OCI-LY7 (cell line): ENCODE measurements at regions of chr6 and their contacts with region 1.

Region 1: DNA sequence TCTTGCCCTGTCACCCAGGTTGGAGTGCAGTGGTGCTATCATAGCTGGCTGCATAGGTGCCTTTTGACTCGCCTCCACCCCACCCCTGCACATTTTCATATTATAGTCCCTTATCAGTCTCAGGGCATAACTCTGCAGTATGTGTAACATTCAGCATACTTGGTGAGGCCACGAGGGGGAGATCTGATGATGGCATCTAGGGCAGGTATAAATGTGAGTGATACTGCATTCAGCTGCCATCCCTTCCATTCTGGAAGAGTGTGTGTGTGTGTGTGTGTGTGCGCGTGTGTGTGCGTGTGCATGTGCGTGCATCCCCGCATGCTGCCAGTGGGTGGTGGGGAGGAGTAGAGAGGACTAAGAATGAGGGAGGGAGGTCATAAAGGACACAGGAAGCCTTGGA is 81.4 kb downstream of the JARID2 start:
- DNase-seq: peak; percentile 78
- H3K4me3 ChIP-seq: no peak overlapping the region
- H3K27ac ChIP-seq: no peak overlapping the region
- H3K4me1 ChIP-seq: peaks cover 78% of the 10 kb centered on the region
- CTCF ChIP-seq: peak; percentile 73

Region 2: GRCh38 chr6:15254070-15254841 is 73.0 kb before region 1 on chr6:
- CTCF ChIA-PET with region 1: no interaction called
- POLR2A ChIA-PET with region 1: interaction called, 5 read pairs
- intact Hi-C with region 1: loop called (anchors 1 kb)
- DNase-seq: peak; percentile 90
- H3K4me3 ChIP-seq: peak overlapping the region; percentile 52
- H3K27ac ChIP-seq: peak overlapping the region; percentile 92
- H3K4me1 ChIP-seq: peaks cover 96% of the 10 kb centered on the region
- CTCF ChIP-seq: peak; percentile 74

Region 3: DNA sequence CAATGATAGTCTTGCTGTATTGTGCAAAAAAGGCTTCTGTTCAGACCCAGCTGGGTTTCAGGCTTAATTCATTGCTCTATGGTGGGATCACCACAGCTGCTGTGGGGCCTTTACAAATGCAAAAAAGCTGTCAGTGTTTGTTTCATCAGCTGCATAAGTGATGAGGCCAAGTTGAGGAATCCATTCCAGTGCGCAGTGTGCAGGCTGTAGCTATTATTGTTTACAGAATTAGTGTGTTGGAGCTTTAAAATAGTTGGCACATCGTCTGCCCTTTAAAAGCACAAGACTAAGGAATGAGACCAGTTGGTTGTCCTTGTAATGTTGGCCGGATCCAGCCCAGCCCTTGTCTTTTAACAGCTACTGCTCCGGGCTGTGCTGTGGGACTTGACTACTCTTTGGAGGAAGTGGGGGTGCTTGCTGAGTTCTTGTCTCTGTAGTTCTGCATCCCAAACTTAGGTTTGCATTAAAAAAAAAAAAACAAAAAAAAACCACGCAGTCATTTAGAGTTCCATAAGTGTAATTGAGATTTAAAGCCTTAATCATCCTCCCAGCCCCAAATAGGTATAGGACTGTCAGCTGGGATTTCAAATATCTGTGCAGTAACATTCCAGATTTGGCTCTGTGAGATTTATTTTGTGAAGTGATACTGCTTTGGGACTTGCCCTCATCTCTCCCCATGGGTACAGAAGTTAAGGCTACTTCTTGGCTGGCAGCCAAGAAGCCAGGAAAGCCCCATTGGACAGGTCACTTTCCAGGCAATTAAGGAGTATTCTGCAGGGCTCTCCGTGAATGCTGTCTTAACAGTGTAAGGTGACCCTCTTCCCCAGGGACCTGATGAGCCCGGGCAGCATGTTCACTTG is 62.1 kb before region 1 on chr6:
- CTCF ChIA-PET with region 1: no interaction called
- POLR2A ChIA-PET with region 1: interaction called, 5 read pairs
- intact Hi-C with region 1: loop called (anchors 5 kb)
- DNase-seq: peak; percentile 51
- H3K4me3 ChIP-seq: peak overlapping the region; percentile 30
- H3K27ac ChIP-seq: no peak overlapping the region
- H3K4me1 ChIP-seq: peaks cover 76% of the 10 kb centered on the region
- CTCF ChIP-seq: no peak

Region 4: GRCh38 chr6:15312500-15312899 is 14.8 kb before region 1 on chr6:
- CTCF ChIA-PET with region 1: interaction called, 4 read pairs
- POLR2A ChIA-PET with region 1: interaction called, 10 read pairs
- intact Hi-C with region 1: no loop called
- DNase-seq: peak; percentile 46
- H3K4me3 ChIP-seq: peak overlapping the region; percentile 35
- H3K27ac ChIP-seq: peak overlapping the region; percentile 44
- H3K4me1 ChIP-seq: peaks cover 60% of the 10 kb centered on the region
- CTCF ChIP-seq: no peak

Region 5: GRCh38 chr6:15343490-15344191 is 16.4 kb after region 1 on chr6:
- CTCF ChIA-PET with region 1: no interaction called
- POLR2A ChIA-PET with region 1: interaction called, 10 read pairs
- intact Hi-C with region 1: no loop called
- DNase-seq: no peak
- H3K4me3 ChIP-seq: no peak overlapping the region
- H3K27ac ChIP-seq: no peak overlapping the region
- H3K4me1 ChIP-seq: peaks cover 26% of the 10 kb centered on the region
- CTCF ChIP-seq: no peak

Region 6: GRCh38 chr6:15389765-15390723 is 62.8 kb after region 1 on chr6:
- CTCF ChIA-PET with region 1: interaction called, 4 read pairs
- POLR2A ChIA-PET with region 1: no interaction called
- intact Hi-C with region 1: loop called (anchors 1 kb)
- DNase-seq: peak; percentile 69
- H3K4me3 ChIP-seq: no peak overlapping the region
- H3K27ac ChIP-seq: no peak overlapping the region
- H3K4me1 ChIP-seq: peaks cover 16% of the 10 kb centered on the region
- CTCF ChIP-seq: peak; percentile 86

Region 7: GRCh38 chr6:15441215-15441868 is 114.1 kb after region 1 on chr6:
- CTCF ChIA-PET with region 1: no interaction called
- POLR2A ChIA-PET with region 1: no interaction called
- intact Hi-C with region 1: loop called (anchors 1 kb)
- DNase-seq: peak; percentile 59
- H3K4me3 ChIP-seq: no peak overlapping the region
- H3K27ac ChIP-seq: no peak overlapping the region
- H3K4me1 ChIP-seq: peaks cover 11% of the 10 kb centered on the region
- CTCF ChIP-seq: peak; percentile 89

Region 8: DNA sequence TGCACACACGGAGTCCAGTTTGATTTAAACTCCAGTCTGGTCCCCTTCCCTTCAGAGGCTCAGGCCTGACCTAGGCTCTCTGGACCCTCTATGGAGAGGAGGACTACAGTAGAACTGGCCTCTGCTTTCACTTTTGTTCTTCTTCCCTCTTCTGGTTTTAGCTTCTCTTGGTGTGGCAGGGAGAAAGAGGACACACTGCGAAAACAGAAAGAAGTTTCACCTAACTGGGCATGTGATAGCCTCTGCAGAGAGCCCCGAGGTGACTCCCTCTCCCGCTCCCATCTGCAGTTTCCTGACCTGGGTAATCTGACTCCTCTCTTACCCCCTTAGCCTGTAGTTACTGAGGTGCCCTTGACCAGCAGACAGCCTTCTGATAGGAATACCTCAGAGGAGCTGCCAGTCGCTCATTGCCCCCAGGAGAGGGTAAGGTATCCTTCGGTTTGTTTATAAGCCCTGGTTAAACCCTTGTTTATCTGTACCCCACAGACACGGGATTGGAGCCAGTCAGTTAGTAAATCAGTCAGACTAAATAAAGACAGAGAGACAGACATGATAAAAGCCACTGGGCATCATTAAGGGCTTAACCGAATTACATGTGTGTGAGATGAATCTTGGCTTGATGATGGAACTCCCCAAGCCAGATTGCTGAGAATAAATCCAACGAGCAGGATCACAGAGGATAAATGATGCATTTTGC is 347.6 kb after region 1 on chr6:
- CTCF ChIA-PET with region 1: no interaction called
- POLR2A ChIA-PET with region 1: no interaction called
- intact Hi-C with region 1: no loop called
- DNase-seq: no peak
- H3K4me3 ChIP-seq: no peak overlapping the region
- H3K27ac ChIP-seq: no peak overlapping the region
- H3K4me1 ChIP-seq: no peaks in the 10 kb centered on the region
- CTCF ChIP-seq: no peak

Region 9: GRCh38 chr6:15879382-15880261 is 552.4 kb after region 1 on chr6:
- CTCF ChIA-PET with region 1: no interaction called
- POLR2A ChIA-PET with region 1: no interaction called
- intact Hi-C with region 1: no loop called
- DNase-seq: peak; percentile 31
- H3K4me3 ChIP-seq: no peak overlapping the region
- H3K27ac ChIP-seq: no peak overlapping the region
- H3K4me1 ChIP-seq: peaks cover 8% of the 10 kb centered on the region
- CTCF ChIP-seq: no peak